Gastrocnemius medialis (tissue), 4 donors: ENCODE measurements at regions of chr4 and their contacts with region 1.

Region 1: DNA sequence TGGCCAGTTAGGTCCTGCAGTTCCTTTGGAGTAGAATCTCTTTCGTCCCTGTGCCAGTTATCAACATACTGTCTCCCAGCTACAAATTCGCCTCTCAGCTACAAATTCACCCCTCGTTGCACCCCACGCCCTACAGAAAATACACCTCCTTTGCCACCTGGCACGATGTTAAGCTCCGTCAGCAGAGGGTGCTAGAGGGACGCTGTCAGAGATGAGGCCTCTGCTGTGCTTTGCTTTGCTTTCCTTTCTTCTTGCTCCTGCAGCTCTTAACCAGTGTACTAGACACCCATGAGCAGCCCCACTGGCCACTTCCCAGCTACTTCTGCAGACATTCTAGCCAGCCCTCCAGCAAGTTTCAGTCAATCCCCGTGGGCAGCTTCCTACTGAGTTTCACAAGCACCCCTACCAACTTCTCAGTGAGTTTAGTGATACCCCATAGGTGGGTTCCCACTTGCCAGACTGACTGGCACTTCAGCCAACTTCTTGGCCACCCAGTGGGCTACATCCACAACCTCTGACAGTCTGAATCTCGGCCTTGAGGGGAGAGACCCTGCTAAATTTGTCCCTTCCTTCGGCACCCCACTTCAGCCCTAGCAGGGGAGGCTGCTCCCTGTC is 21.8 kb downstream of the HAUS3 start:
- DNase-seq: peak; percentile 39 to 57
- ATAC-seq: peak; percentile 89 to 93
- H3K4me3 ChIP-seq: no peak overlapping the region
- H3K27ac ChIP-seq: no peak overlapping the region
- H3K4me1 ChIP-seq: peaks cover 0 to 14% of the 10 kb centered on the region in 2 donors
- H3K27me3 ChIP-seq: no peaks in the 10 kb centered on the region
- CTCF ChIP-seq: peak; percentile 68 to 87 (median 82)
- POLR2A ChIP-seq: no peak

Region 2: DNA sequence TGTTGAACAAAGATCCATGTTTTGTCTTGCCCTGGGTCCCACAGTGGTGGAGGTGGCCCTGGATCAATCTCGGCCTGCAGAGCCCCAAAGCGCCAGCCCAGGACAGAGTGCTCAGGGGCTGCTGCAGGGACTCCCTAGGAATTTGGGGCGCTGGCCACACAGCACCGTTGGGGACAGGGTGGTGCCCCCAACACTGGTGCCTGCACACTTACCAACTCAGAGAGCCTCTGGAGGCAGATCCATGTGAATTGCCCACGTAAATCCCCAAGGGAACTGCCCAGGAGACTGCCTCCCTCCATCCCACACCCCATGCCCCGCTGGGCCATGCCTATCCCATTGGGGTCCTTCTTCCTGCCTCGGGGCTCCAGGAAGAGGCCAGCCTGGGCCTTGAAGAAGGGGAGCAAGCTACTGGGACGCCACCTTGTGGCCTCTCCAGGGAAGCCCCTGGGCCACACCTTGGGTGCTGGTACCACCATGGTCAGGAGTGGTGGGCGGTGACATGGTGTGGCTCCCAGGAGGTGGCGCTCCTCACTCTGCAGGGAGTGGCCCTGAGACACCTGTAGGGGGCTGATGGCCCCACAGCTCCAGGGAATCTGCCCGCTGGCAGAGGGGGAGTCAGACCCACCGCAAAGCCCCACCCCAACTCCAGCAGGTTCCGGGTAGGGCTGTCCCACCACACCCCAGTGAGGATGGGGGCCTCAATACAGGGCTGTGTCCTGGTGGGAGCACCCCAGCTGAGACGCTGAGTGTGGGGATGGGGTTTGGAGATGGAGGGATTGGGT is 221.5 kb after region 1 on chr4:
- in situ Hi-C with region 1: loop called in 2 of 4 experiments (anchors 10 kb)
- intact Hi-C with region 1: loop called (anchors 1 kb)
- DNase-seq: peak in 1 of 2 donors; percentile 39
- ATAC-seq: peak; percentile 43 to 65
- H3K4me3 ChIP-seq: no peak overlapping the region
- H3K27ac ChIP-seq: no peak overlapping the region
- H3K4me1 ChIP-seq: no peaks in the 10 kb centered on the region
- H3K27me3 ChIP-seq: no peaks in the 10 kb centered on the region
- CTCF ChIP-seq: peak; percentile 36 to 80 (median 70)
- POLR2A ChIP-seq: no peak

Region 3: DNA sequence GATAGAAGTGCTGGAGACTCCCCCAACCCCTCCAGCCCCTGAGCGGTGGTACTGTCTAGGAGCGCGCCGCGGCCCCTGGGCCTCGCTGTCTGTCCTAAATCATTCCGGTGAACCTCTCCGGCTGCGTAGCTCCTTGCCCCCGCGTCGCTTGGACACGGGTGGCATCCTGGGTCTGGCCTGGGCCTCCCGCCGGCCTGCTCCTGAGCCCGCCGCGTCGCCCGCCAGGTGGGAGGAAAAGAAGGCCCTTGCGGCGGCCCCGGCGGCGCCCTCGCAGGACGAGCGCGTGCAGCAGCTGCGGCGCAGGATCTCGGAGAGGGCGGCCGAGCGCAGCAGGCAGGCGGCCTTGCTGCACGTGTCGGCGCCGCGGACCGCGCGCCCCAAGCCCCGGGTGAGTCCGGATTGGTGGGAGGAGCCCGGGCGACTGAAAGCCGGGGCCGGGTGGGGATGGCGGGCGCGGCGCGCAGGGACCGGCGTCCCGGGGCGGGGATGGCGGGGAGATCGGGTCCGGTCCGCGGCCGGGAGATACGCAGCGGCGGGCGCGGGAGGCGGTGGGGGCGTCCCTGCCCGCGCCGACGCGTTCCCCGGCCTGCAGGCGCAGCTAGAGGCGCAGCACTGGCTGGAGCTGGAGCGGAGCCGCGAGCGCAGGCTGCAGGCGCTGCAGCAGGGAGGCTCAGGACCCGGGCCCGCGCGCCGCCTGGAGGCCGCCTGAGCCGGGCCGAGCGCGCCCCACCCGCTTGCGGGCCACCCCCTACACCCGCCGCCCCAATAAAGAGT is 242.3 kb after region 1 on chr4:
- in situ Hi-C with region 1: loop called in 3 of 4 experiments (anchors 10 to 25 kb)
- intact Hi-C with region 1: loop called (anchors 1 kb)
- DNase-seq: peak; percentile 38 to 46
- ATAC-seq: peak; percentile 81 to 86
- H3K4me3 ChIP-seq: peak overlapping the region; percentile 34 to 73 (median 58)
- H3K27ac ChIP-seq: peak overlapping the region in 3 of 4 donors; percentile 34 to 37 (median 35)
- H3K4me1 ChIP-seq: peaks cover 5 to 8% of the 10 kb centered on the region in 2 donors
- H3K27me3 ChIP-seq: no peaks in the 10 kb centered on the region
- CTCF ChIP-seq: peak in 4 of 5 experiments; percentile 36 to 78 (median 62)
- POLR2A ChIP-seq: no peak

Region 4: GRCh38 chr4:2468445-2469192 is 248.5 kb after region 1 on chr4 and contains the start of gene RNF4:
- in situ Hi-C with region 1: loop called in 3 of 4 experiments (anchors 10 to 25 kb)
- intact Hi-C with region 1: no loop called
- DNase-seq: peak; percentile 94 to 97
- ATAC-seq: peak; percentile 98
- H3K4me3 ChIP-seq: peak within 1 kb of the TSS; percentile 81 to 89 (median 88)
- H3K27ac ChIP-seq: peak within 1 kb of the TSS; percentile 88 to 98 (median 94)
- H3K4me1 ChIP-seq: peaks cover 26 to 27% of the 10 kb centered on the region in 2 donors
- H3K27me3 ChIP-seq: no peaks in the 10 kb centered on the region
- CTCF ChIP-seq: no peak
- POLR2A ChIP-seq: peak; percentile 75 to 81
- total RNA-seq, gene RNF4: 21.7 to 48.7 (median 34.7) TPM

Region 5: DNA sequence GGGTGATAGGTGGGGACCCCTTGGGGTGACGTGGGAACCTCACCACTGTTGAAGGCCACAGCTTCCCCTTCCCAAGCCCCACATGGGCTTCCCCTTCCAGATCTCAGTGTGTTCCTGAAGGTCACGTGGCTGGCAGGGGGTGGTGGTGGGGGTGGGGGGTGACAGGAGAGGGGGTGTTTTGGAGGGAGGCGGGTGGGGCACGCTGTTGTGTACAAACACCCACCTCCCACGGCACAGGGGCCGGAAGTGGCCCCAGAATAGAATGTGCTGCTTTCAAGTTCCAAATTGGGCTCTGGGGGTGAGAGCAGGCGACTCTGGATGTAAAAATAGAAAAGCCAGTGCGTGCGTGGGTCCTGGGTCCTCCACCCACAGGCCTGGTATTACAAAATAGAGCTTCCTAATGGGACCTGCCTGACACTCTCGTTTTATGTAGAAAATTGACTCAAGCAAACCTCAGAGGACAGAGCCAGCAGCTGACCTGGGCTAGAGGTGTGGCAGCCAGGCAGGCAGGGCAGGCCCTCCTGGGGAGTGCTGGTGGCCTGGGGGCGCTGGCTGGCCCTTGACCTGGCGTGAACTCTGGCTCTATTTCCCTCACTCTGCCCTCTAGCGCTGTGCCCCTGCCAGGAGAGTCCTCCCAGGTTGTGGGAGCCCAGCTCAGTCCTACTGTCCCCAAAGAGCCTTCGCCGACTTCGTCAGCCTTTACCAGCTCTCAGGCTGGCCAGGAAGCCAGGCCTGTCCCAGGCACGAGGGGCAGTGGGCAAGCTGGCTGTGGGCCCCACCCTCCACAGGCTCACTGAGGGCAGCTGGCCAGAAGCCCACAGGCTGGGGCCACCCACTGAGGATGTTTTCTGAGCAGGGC is 567.3 kb after region 1 on chr4:
- in situ Hi-C with region 1: no loop called
- intact Hi-C with region 1: no loop called
- DNase-seq: peak in 1 of 2 donors; percentile 50
- ATAC-seq: peak; percentile 30 to 35
- H3K4me3 ChIP-seq: no peak overlapping the region
- H3K27ac ChIP-seq: peak overlapping the region; percentile 34 to 69 (median 66)
- H3K4me1 ChIP-seq: peaks cover 11 to 20% of the 10 kb centered on the region in 2 donors
- H3K27me3 ChIP-seq: no peaks in the 10 kb centered on the region
- CTCF ChIP-seq: no peak
- POLR2A ChIP-seq: no peak

Region 6: DNA sequence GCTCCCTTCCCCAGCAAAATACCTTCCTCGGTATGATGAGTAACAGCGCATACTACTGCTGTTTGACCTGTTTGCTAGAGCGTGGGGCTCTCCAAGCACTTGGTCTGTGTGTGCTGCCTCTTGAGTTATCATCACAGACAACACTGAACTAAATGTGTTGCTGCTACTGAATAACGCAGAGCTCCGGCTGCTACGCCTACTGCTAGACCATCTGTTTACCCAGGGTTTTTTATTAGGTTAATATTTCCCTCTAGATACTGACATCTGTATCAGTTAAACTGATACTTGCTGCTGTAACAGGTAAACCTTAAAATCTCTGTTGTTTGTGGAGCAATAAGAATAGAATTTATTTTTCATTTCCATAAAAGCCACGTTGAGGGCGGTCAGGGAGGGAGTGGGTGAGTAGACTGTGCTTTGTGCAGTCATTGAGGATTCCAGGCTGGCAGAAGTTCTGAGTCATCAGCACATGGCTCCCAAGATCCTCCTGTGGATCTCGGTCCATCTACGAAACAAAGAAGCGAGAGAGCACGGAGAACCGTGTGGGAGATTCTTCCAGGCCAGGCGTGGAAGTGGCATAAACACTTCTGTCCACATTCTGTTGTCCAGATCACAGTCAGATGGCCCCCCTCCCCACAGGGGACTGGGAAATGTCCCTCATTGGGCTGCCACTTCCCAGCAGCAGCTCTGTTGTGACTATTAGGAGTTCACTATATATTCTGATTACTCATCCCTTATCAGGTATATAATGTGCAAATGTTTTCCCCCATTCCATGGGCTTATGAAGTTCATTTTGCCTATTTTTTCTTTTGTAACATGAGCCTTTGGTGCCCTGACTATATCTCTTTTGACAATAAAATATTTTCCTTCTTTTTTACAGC is 757.3 kb after region 1 on chr4:
- in situ Hi-C with region 1: loop called in 2 of 4 experiments (anchors 25 kb)
- intact Hi-C with region 1: no loop called
- DNase-seq: no peak
- ATAC-seq: no peak
- H3K4me3 ChIP-seq: no peak overlapping the region
- H3K27ac ChIP-seq: no peak overlapping the region
- H3K4me1 ChIP-seq: no peaks in the 10 kb centered on the region
- H3K27me3 ChIP-seq: no peaks in the 10 kb centered on the region
- CTCF ChIP-seq: no peak
- POLR2A ChIP-seq: no peak